ENCODE measurements at regions of chr3 and their contacts with region 1.

Region 1: DNA sequence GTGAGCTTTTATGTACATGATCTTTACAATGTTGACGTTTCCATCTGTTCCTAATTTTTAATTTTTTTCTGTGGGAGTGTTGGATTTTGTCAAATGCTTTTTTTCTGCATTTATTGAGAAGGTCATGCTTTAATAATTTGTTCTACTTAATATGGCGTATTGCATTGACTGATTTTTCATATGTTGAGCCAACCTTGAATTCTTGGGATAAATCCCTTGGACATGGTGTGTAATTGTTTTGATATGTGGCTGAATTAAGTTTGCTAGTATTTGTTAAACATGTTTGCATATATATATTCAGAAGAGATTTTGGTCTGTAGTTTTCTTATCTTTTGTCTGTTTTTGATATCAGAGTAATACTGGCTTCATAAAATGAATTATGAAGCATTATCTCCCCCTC is 256.7 kb downstream of the EDEM1 start:
- DNase-seq: no peak
- H3K4me3 ChIP-seq: no peak overlapping the region
- H3K27ac ChIP-seq: no peak overlapping the region
- H3K4me1 ChIP-seq: no peaks in the 10 kb centered on the region
- H3K27me3 ChIP-seq: no peaks in the 10 kb centered on the region
- CTCF ChIP-seq: no peak

Region 2: GRCh38 chr3:6679510-6679909 is 1235.3 kb after region 1 on chr3:
- CTCF ChIA-PET with region 1: no interaction called
- POLR2A ChIA-PET with region 1: interaction called, 10 read pairs
- intact Hi-C with region 1: no loop called
- DNase-seq: no peak
- H3K4me3 ChIP-seq: no peak overlapping the region
- H3K27ac ChIP-seq: no peak overlapping the region
- H3K4me1 ChIP-seq: no peaks in the 10 kb centered on the region
- H3K27me3 ChIP-seq: no peaks in the 10 kb centered on the region
- CTCF ChIP-seq: no peak